GM18951 (cell line): ENCODE measurements at regions of chr18 and their contacts with region 1.

Region 1: GRCh38 chr18:12236934-12237832 is 17.0 kb upstream of the CIDEA start:
- POLR2A ChIP-seq: no peak

Region 2: GRCh38 chr18:12076424-12077140 is 160.6 kb before region 1 on chr18:
- in situ Hi-C with region 1: loop called (anchors 25 kb)
- POLR2A ChIP-seq: no peak